Common myeloid progenitor, CD34-positive (primary cell): ENCODE measurements at regions of chr16 and their contacts with region 1.

Region 1: GRCh38 chr16:23435500-23435899 is 17.5 kb downstream of the COG7 start:
- DNase-seq: peak; percentile 72 to 83 (median 79)
- H3K4me3 ChIP-seq: peak overlapping the region in 1 of 7 experiments; percentile 28
- H3K27ac ChIP-seq: no peak overlapping the region
- H3K4me1 ChIP-seq: peaks cover 0 to 20% (median 10%) of the 10 kb centered on the region in 4 experiments
- H3K27me3 ChIP-seq: no peaks in the 10 kb centered on the region

Region 2: GRCh38 chr16:22898874-22899348 is 536.6 kb before region 1 on chr16:
- CTCF ChIA-PET with region 1: interaction called, 10 read pairs
- POLR2A ChIA-PET with region 1: no interaction called
- DNase-seq: peak; percentile 58 to 72 (median 67)
- H3K4me3 ChIP-seq: no peak overlapping the region
- H3K27ac ChIP-seq: no peak overlapping the region
- H3K4me1 ChIP-seq: no peaks in the 10 kb centered on the region
- H3K27me3 ChIP-seq: peaks cover 4 to 55% (median 8%) of the 10 kb centered on the region in 5 experiments

Region 3: GRCh38 chr16:23424292-23424958 is 11.1 kb before region 1 on chr16:
- CTCF ChIA-PET with region 1: interaction called, 10 read pairs
- POLR2A ChIA-PET with region 1: no interaction called
- DNase-seq: no peak
- H3K4me3 ChIP-seq: no peak overlapping the region
- H3K27ac ChIP-seq: no peak overlapping the region
- H3K4me1 ChIP-seq: no peaks in the 10 kb centered on the region
- H3K27me3 ChIP-seq: no peaks in the 10 kb centered on the region

Region 4: DNA sequence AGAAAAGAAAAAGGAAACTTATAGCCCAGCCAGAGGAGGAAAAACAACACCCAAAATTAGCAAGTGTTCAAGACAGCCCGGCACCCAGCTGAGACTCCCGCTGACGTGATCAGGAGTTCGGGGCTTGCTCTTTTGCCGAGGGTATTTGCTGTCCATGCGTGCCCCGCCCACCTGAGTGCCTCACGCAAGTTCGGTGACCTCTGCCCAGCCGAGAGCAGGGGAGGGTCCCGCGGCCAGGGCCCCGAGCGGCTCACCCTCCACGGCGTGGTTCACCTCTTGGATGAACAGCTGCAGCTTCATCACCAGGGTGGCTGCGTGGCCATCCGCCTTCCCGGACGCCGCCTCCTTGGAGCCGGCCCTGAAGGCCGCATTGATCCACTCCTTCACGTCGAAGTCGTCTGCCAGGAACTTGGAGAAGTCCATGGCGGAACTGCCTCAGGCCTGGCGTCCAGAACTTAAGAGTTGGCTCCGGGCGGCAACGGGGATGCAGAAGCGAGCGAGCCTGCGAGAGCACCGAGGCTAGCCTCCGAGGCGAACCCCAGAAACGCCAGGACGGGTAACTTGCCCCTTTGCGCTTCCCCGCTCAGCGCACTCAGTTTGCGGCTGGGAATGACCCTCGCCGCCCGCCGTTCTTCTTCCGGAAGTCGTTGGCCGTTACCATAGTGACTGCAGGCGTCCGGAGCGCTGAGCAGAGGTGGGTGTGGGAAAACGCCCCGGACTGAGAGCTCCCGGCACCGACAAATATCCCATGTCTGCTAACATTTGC is 17.3 kb after region 1 on chr16 and contains the start of gene COG7:
- CTCF ChIA-PET with region 1: interaction called, 71 read pairs
- POLR2A ChIA-PET with region 1: no interaction called
- DNase-seq: peak; percentile 87 to 88 (median 88)
- H3K4me3 ChIP-seq: peak within 1 kb of the TSS; percentile 77 to 99 (median 91)
- H3K27ac ChIP-seq: peak within 1 kb of the TSS; percentile 54 to 89
- H3K4me1 ChIP-seq: peaks cover 6 to 16% (median 12%) of the 10 kb centered on the region in 4 experiments
- H3K27me3 ChIP-seq: no peaks in the 10 kb centered on the region